ENCODE measurements at regions of chr14 and their contacts with region 1.

Region 1: GRCh38 chr14:75709207-75709812 is 48.3 kb downstream of the TTLL5 start:
- DNase-seq: peak; percentile 43 to 94 (median 76)

Region 2: DNA sequence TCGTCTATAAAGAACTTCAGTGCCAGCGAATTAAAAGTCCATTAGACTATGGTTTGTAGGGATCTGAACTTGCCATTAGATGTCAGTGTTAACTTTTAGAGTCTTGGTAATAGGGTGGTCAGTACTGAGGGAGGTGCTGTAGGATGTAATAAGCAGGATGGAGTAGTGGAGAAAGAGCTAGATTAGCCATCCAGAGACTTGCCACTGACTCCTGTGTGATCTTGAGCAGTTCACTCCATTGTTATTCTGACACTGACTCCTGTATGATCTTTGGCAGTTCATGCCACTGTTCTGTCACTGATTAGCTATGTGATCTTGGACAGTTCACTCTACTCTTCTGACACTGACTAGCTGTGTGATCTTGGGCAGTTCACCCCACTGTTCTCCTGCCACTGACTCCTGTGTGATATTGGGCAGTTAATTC is 85.3 kb after region 1 on chr14:
- intact Hi-C with region 1: loop called (anchors 1 kb)
- DNase-seq: no peak

Region 3: DNA sequence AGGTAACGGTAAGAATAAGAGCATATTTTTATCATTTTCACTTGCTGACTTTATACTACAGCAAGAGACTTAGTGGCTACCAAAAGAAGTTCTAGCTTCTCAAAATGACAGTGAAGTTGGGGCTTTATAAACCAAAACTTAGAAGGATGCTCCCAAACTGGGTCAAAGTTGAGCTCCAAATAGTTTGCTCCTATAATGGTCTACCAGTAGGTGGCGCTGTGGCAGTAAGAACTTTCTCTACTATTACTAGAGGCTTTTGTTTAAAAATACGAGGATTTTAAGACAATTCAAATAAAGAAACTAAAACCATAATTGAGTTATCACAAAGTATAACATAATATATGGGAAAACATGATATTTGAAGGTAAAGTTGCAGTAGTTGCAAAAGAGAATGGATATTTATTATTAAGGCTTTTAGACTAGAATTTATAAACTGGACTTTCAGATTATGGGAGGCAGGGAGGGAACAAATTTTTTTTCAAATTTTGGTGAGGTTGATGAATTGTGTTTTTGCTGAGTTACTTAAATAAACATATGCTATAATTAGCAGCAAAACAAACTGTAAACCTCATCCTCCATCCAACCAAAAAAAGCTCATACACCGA is 197.5 kb after region 1 on chr14:
- intact Hi-C with region 1: loop called (anchors 5 kb)
- DNase-seq: peak in 5 of 10 donors; percentile 52 to 83 (median 76)